ENCODE measurements at regions of chr4 and their contacts with region 1.

Region 1: DNA sequence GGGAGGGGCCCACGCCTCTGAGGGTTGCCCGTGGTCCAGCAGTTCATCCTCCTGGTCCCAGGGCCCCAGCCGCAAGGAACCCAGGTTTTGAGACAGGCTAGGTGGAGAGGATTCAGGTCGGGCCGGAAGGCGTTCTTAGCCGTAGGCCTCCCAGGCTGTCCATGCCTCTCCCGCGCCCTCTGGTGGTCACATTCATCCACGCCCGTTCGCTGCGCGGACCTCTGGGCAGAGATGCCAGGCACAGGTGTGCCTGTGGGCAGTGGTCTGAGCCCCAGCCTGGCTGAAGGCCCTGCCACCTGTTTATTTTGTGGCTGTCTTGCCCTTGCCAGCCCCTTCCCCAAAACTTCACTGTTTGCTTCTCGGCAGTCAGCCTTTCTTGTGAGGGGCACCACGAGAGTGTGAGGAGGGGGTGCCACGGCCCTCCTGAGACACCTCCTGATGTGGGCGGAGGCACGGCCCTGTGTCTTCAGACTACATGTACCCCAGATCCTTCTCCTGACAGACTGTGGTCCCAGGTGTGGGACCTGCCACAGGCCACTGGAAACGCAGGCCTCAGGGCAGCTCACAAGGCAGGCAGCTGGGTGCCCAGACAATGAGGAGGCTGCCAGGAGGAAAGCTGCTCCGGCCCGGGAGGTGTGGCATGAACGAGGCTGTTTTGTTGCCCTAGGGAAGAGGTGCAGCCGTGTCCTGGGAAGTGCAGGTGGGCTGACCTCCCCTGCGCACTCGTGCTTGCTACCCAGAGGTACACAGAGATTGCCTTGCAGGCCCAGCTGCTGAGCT is 5.0 kb downstream of the UVSSA start:
- DNase-seq: peak; percentile 81
- H3K4me3 Mint-ChIP-seq: no peak overlapping the region
- H3K27ac Mint-ChIP-seq: peak overlapping the region; percentile 42
- H3K4me1 Mint-ChIP-seq: peaks cover 15% of the 10 kb centered on the region
- H3K27me3 Mint-ChIP-seq: no peaks in the 10 kb centered on the region
- CTCF ChIP-seq: peak; percentile 85

Region 2: GRCh38 chr4:1130316-1131186 is 221.5 kb before region 1 on chr4:
- CTCF ChIA-PET with region 1: interaction called, 31 read pairs
- POLR2A ChIA-PET with region 1: interaction called, 5 read pairs
- intact Hi-C with region 1: loop called (anchors 1 kb)
- DNase-seq: peak; percentile 79
- H3K4me3 Mint-ChIP-seq: no peak overlapping the region
- H3K27ac Mint-ChIP-seq: no peak overlapping the region
- H3K4me1 Mint-ChIP-seq: no peaks in the 10 kb centered on the region
- H3K27me3 Mint-ChIP-seq: peaks cover 47% of the 10 kb centered on the region
- CTCF ChIP-seq: peak; percentile 99

Region 3: GRCh38 chr4:1365271-1366178 is 13.5 kb after region 1 on chr4:
- CTCF ChIA-PET with region 1: interaction called, 10 read pairs
- POLR2A ChIA-PET with region 1: no interaction called
- intact Hi-C with region 1: no loop called
- DNase-seq: no peak
- H3K4me3 Mint-ChIP-seq: no peak overlapping the region
- H3K27ac Mint-ChIP-seq: no peak overlapping the region
- H3K4me1 Mint-ChIP-seq: no peaks in the 10 kb centered on the region
- H3K27me3 Mint-ChIP-seq: no peaks in the 10 kb centered on the region
- CTCF ChIP-seq: no peak

Region 4: GRCh38 chr4:1628892-1629698 is 277.1 kb after region 1 on chr4:
- CTCF ChIA-PET with region 1: interaction called, 15 read pairs
- POLR2A ChIA-PET with region 1: interaction called, 3 read pairs
- intact Hi-C with region 1: loop called (anchors 1 kb)
- DNase-seq: peak; percentile 52
- H3K4me3 Mint-ChIP-seq: no peak overlapping the region
- H3K27ac Mint-ChIP-seq: no peak overlapping the region
- H3K4me1 Mint-ChIP-seq: no peaks in the 10 kb centered on the region
- H3K27me3 Mint-ChIP-seq: no peaks in the 10 kb centered on the region
- CTCF ChIP-seq: peak; percentile 98